ENCODE measurements at regions of chr1 and their contacts with region 1.

Region 1: DNA sequence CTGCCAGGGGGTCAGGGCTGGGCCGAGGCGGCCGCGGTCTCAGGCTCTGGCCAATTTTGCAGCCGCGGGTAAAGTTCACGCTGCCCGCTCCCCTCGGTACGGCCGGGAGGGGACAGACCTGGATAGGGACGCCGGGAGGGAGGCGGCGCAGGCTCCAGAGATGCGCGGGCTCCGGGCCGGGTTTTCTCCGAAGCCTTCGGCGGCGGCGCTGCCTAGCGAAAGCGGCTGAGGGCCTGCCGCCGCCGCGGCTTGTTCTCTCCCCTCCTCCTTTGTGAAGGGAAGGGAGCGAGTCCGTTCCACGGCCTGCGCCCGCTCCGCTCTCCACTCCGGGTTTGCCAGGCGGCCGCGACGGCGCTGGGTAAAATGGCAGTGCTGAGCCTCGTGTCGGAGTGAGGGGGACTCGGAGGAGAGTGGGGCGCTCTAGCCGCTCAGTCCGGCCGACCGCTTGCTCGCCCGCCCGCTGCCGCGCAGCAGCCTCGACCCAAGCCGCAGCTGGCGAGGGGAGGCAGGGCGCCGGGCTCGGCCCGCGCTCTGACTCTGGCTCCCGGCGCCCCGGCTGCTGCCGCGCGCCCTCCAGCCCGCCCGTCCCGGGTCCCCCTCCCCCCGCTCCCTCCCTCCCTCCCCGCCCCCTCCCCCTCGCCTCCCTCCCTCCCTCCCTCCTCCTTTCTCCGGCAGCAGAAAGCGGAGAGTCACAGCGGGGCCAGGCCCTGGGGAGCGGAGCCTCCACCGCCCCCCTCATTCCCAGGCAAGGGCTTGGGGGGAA is at the start of gene ARID1A:
- DNase-seq: peak; percentile 96
- ATAC-seq: peak; percentile 62
- H3K4me3 Mint-ChIP-seq: peak within 1 kb of the TSS; percentile 92
- H3K27ac Mint-ChIP-seq: peak within 1 kb of the TSS; percentile 93
- H3K4me1 Mint-ChIP-seq: peaks cover 34% of the 10 kb centered on the region
- H3K27me3 Mint-ChIP-seq: no peaks in the 10 kb centered on the region
- CTCF ChIP-seq: no peak
- total RNA-seq, gene ARID1A: 116 and 142 TPM in 2 replicates

Region 2: DNA sequence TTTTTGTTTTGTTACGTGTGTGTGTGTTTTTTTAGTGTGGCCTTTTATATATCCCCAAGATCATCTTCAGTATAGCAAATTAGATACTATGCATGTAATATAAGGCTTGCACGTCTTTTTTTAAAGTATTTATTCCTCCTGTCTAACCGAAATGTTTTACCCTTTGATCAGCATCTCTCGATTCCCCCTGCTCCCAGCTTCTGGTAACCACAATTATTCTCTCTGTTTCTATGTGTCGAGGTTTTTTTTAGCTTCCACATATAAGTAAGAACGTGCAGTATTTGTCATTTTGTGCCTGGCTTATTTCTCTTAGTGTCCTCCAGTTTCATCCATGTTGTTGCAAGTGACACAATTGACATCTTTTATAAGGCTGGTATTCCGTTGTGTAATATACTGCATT is 442.8 kb before region 1 on chr1:
- CTCF ChIA-PET with region 1: no interaction called
- POLR2A ChIA-PET with region 1: no interaction called
- intact Hi-C with region 1: no loop called
- DNase-seq: no peak
- ATAC-seq: no peak
- H3K4me3 Mint-ChIP-seq: no peak overlapping the region
- H3K27ac Mint-ChIP-seq: no peak overlapping the region
- H3K4me1 Mint-ChIP-seq: peaks cover 8% of the 10 kb centered on the region
- H3K27me3 Mint-ChIP-seq: no peaks in the 10 kb centered on the region
- CTCF ChIP-seq: no peak

Region 3: DNA sequence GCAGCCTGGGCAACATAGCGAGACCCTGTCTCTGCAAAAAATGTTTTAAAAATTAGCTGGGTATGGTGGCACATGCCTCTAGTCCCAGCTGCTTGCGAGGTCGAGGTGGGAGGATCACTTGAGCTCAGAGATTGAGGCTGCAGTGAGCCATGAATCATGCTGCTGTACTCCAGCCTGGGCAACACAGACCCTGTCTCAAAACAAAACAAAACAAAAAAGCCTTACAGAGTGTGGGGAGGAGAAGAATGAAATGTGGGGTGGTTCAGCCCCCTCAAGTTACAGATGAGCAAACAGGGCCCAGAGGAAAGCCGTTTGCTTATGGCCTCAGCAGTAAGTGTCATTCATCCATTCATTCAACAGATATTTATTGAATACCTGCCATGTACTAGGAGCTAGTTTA is 125.2 kb before region 1 on chr1:
- CTCF ChIA-PET with region 1: no interaction called
- POLR2A ChIA-PET with region 1: no interaction called
- intact Hi-C with region 1: no loop called
- DNase-seq: no peak
- ATAC-seq: no peak
- H3K4me3 Mint-ChIP-seq: no peak overlapping the region
- H3K27ac Mint-ChIP-seq: no peak overlapping the region
- H3K4me1 Mint-ChIP-seq: no peaks in the 10 kb centered on the region
- H3K27me3 Mint-ChIP-seq: no peaks in the 10 kb centered on the region
- CTCF ChIP-seq: no peak

Region 4: DNA sequence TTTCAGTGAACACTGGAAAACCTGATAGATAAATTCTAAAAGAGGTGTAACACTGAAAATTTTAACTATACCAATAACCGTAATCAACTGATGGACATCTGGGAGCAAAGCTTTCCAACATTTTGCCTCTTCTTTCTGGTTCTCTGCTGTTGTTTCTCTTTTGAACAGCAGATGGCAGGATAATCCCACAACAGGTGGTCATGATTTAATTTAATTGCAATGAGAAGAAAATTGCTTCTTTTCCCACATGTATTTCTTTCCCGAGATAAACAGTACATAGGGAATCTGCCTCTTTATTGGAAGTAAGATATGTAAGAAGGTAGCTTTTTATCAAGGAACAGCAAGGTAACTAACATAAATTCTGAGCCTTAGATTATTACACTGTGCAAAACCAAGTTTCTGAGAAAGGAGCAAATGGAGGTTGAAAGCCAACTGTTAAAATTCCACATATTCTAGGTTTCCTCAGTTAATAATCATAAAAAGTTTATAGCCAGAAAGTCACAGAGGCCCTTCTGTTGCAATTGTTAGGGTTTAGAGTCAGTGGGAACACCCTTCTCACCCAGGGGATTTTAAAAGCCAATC is 93.1 kb before region 1 on chr1:
- CTCF ChIA-PET with region 1: interaction called, 17 read pairs
- POLR2A ChIA-PET with region 1: interaction called, 14 read pairs
- intact Hi-C with region 1: loop called (anchors 1 kb)
- DNase-seq: no peak
- ATAC-seq: peak; percentile 57
- H3K4me3 Mint-ChIP-seq: no peak overlapping the region
- H3K27ac Mint-ChIP-seq: no peak overlapping the region
- H3K4me1 Mint-ChIP-seq: peaks cover 3% of the 10 kb centered on the region
- H3K27me3 Mint-ChIP-seq: peaks cover 2% of the 10 kb centered on the region
- CTCF ChIP-seq: peak; percentile 83

Region 5: DNA sequence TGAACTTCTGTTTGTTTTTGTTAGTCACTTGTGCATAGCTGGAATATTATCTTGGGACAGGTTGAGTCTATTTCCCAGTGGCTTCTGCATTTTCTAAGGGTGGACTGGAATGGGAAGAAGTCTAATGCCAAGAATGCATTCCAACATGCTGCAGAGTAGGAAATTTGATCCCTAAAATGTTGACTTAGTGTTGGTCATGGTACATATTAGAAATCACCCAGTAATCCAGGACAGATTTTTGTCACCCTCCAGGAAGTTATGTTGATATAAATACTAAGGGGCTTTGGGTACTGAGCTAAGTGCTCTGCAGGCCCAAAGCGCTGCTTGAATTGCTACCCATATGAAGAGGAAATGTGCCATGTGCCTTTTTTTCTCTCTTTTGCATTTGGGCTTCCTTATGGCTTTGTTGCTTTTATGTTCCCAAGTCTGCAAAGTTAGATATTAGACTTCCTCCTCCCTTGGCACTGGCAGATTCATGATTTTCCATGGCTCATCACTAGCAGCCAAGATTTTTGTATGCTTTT is 10.3 kb after region 1 on chr1:
- CTCF ChIA-PET with region 1: interaction called, 8 read pairs
- POLR2A ChIA-PET with region 1: interaction called, 39 read pairs
- intact Hi-C with region 1: no loop called
- DNase-seq: no peak
- ATAC-seq: no peak
- H3K4me3 Mint-ChIP-seq: peak overlapping the region; percentile 50
- H3K27ac Mint-ChIP-seq: peak overlapping the region; percentile 79
- H3K4me1 Mint-ChIP-seq: peaks cover 43% of the 10 kb centered on the region
- H3K27me3 Mint-ChIP-seq: no peaks in the 10 kb centered on the region
- CTCF ChIP-seq: no peak

Region 6: GRCh38 chr1:26744075-26744959 is 48.8 kb after region 1 on chr1:
- CTCF ChIA-PET with region 1: interaction called, 4 read pairs
- POLR2A ChIA-PET with region 1: interaction called, 45 read pairs
- intact Hi-C with region 1: loop called (anchors 1 kb)
- DNase-seq: peak; percentile 57
- ATAC-seq: peak; percentile 96
- H3K4me3 Mint-ChIP-seq: peak overlapping the region; percentile 79
- H3K27ac Mint-ChIP-seq: peak overlapping the region; percentile 97
- H3K4me1 Mint-ChIP-seq: peaks cover 91% of the 10 kb centered on the region
- H3K27me3 Mint-ChIP-seq: no peaks in the 10 kb centered on the region
- CTCF ChIP-seq: no peak

Region 7: GRCh38 chr1:27341525-27342252 is 646.2 kb after region 1 on chr1 and contains the start of gene SYTL1:
- CTCF ChIA-PET with region 1: no interaction called
- POLR2A ChIA-PET with region 1: no interaction called
- intact Hi-C with region 1: loop called (anchors 10 kb)
- DNase-seq: peak; percentile 72
- ATAC-seq: peak; percentile 76
- H3K4me3 Mint-ChIP-seq: peak within 1 kb of the TSS; percentile 80
- H3K27ac Mint-ChIP-seq: peak within 1 kb of the TSS; percentile 87
- H3K4me1 Mint-ChIP-seq: peaks cover 67% of the 10 kb centered on the region
- H3K27me3 Mint-ChIP-seq: no peaks in the 10 kb centered on the region
- CTCF ChIP-seq: no peak
- total RNA-seq, gene SYTL1: 76.0 and 81.9 TPM in 2 replicates

Measured in activated B cell treated with CpG ODN at 0.5 μM for 24 hours (primary cell).